MCF 10A (cell line): ENCODE measurements at regions of chr18 and their contacts with region 1.

Region 1: DNA sequence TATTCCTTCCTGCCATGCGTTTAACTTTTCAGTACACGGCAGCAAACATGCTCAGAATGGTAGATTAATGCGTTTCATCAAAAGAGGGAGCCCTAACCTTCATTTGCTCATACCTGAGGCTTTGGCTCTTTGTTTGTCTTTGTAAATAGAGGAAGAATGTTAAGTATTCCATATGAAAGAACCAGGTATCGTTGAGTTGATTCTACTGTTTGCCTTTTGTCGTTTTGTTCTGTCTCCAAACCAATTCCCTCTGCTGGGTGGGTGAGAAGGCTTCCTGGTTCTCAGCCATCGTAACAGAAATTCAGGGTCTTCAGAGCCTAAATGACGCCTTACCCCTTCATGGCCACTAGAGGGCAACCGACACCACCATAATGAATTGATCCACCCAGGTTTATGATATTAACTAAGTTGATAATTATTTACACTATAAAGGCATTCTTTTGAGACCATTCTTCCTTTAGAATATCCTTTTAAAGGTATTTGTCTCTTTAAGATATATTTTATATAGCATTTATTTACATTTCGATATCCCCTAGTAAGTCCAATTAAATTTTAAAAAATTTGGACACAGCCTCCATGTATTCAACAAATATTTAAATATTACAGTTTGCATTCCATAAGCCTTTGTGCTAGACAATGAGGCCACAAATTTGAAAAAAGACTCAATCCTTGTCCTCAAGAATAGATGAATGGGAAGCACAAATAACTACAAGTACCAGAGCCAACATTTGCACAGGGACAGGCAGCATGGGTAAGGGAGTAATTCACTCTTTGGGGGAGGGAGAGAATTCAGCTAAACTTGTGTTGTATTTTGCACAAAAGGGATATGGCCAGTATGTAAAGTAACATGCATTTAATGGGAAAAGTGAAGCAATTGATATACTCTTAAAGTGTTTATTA is 48.1 kb downstream of the TIMM21 start:
- DNase-seq: peak; percentile 75
- H3K4me3 Mint-ChIP-seq: peak overlapping the region; percentile 70
- H3K27ac Mint-ChIP-seq: no peak overlapping the region
- H3K4me1 Mint-ChIP-seq: peaks cover 5% of the 10 kb centered on the region
- H3K27me3 Mint-ChIP-seq: peaks cover 25% of the 10 kb centered on the region
- CTCF ChIP-seq: peak; percentile 82

Region 2: DNA sequence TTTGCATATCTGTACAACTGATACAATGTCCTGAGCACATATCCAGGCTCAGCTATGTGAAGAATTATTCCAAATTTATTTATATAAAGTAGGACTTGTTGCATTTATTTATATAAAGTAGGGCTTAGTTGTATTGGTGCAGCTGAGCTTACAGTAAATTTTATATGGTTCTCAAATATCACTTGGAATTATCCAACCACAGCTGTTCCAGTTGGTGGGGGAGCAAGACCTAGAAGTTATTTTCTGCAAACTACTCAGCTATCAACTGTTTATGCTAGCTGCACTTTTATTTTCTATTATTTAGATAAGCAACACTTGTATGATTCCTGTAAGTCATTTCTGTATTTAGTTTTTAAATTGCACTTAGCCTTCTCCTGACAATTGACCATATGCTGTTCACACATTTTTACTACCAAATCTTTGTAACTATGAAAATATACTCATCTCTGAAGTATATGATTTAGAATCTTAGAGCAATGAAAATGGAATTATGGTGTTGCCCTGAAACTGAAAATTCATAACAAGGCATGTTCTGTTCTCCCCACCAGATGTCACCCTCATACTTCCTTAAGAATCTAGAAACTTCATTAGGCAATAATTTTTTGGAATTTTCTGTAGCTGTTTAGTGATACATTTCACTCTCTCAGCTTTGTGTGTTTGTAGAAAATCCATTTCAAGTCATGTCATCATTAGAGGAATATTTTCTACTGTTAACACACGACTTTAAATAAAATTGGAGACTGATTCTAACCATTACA is 1495.3 kb before region 1 on chr18:
- CTCF ChIA-PET with region 1: interaction called, 5 read pairs
- POLR2A ChIA-PET with region 1: no interaction called
- intact Hi-C with region 1: loop called (anchors 1 kb)
- DNase-seq: peak; percentile 40
- H3K4me3 Mint-ChIP-seq: no peak overlapping the region
- H3K27ac Mint-ChIP-seq: no peak overlapping the region
- H3K4me1 Mint-ChIP-seq: no peaks in the 10 kb centered on the region
- H3K27me3 Mint-ChIP-seq: no peaks in the 10 kb centered on the region
- CTCF ChIP-seq: peak; percentile 61

Region 3: GRCh38 chr18:74286856-74287255 is 90.4 kb after region 1 on chr18:
- CTCF ChIA-PET with region 1: interaction called, 9 read pairs
- POLR2A ChIA-PET with region 1: no interaction called
- intact Hi-C with region 1: loop called (anchors 1 kb)
- DNase-seq: no peak
- H3K4me3 Mint-ChIP-seq: no peak overlapping the region
- H3K27ac Mint-ChIP-seq: peak overlapping the region; percentile 35
- H3K4me1 Mint-ChIP-seq: peaks cover 25% of the 10 kb centered on the region
- H3K27me3 Mint-ChIP-seq: no peaks in the 10 kb centered on the region
- CTCF ChIP-seq: no peak

Region 4: GRCh38 chr18:74331404-74331803 is 134.9 kb after region 1 on chr18:
- CTCF ChIA-PET with region 1: interaction called, 6 read pairs
- POLR2A ChIA-PET with region 1: no interaction called
- intact Hi-C with region 1: loop called (anchors 1 kb)
- DNase-seq: peak; percentile 56
- H3K4me3 Mint-ChIP-seq: no peak overlapping the region
- H3K27ac Mint-ChIP-seq: no peak overlapping the region
- H3K4me1 Mint-ChIP-seq: no peaks in the 10 kb centered on the region
- H3K27me3 Mint-ChIP-seq: no peaks in the 10 kb centered on the region
- CTCF ChIP-seq: peak; percentile 17

Region 5: DNA sequence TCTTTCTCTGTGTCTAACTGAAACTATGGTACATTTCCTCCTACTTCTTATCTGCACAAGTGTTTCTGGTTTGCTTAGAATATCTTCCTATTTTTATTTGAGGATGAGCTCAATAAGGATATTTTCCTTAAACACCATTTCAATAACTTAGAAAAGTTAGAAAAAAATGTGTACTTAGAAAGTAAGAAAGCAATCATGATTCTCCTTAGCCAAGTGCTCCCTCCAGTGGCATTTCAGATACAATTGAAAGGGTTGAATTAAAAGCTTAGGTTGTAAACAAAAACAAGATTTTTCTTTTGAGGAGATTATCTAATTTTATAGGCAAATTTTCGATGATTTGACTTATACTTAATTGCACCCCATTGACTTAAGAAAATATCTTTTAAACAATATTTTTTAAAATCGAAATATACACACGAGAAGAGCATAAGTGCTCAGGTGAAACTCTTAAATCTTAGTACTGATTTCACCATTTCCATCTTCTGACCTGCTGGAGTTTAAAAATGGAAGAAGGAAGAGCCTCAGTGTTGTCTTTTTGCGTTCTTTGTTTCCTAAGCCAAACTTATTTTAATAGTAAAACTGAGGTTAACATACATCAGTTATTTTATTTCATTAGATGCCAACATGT is 146.1 kb after region 1 on chr18:
- CTCF ChIA-PET with region 1: interaction called, 89 read pairs
- POLR2A ChIA-PET with region 1: interaction called, 4 read pairs
- intact Hi-C with region 1: loop called (anchors 1 kb)
- DNase-seq: peak; percentile 60
- H3K4me3 Mint-ChIP-seq: no peak overlapping the region
- H3K27ac Mint-ChIP-seq: no peak overlapping the region
- H3K4me1 Mint-ChIP-seq: no peaks in the 10 kb centered on the region
- H3K27me3 Mint-ChIP-seq: peaks cover 41% of the 10 kb centered on the region
- CTCF ChIP-seq: peak; percentile 62

Region 6: GRCh38 chr18:74495581-74496507 is 299.4 kb after region 1 on chr18 and contains the start of gene CNDP2:
- CTCF ChIA-PET with region 1: interaction called, 7 read pairs
- POLR2A ChIA-PET with region 1: interaction called, 5 read pairs
- intact Hi-C with region 1: loop called (anchors 1 kb)
- DNase-seq: peak; percentile 99
- H3K4me3 Mint-ChIP-seq: peak within 1 kb of the TSS; percentile 88
- H3K27ac Mint-ChIP-seq: peak within 1 kb of the TSS; percentile 88
- H3K4me1 Mint-ChIP-seq: peaks cover 22% of the 10 kb centered on the region
- H3K27me3 Mint-ChIP-seq: no peaks in the 10 kb centered on the region
- CTCF ChIP-seq: no peak
- total RNA-seq, gene CNDP2: 194 and 219 TPM in 2 replicates